Activated naive CD4-positive, alpha-beta T cell treated with anti-CD3 and anti-CD28 coated beads, Interleukin-2, amount 10 ng/mL, durations not matched to agents 7 days and 5 days (primary cell): ENCODE measurements at regions of chr6 and their contacts with region 1.

Region 1: DNA sequence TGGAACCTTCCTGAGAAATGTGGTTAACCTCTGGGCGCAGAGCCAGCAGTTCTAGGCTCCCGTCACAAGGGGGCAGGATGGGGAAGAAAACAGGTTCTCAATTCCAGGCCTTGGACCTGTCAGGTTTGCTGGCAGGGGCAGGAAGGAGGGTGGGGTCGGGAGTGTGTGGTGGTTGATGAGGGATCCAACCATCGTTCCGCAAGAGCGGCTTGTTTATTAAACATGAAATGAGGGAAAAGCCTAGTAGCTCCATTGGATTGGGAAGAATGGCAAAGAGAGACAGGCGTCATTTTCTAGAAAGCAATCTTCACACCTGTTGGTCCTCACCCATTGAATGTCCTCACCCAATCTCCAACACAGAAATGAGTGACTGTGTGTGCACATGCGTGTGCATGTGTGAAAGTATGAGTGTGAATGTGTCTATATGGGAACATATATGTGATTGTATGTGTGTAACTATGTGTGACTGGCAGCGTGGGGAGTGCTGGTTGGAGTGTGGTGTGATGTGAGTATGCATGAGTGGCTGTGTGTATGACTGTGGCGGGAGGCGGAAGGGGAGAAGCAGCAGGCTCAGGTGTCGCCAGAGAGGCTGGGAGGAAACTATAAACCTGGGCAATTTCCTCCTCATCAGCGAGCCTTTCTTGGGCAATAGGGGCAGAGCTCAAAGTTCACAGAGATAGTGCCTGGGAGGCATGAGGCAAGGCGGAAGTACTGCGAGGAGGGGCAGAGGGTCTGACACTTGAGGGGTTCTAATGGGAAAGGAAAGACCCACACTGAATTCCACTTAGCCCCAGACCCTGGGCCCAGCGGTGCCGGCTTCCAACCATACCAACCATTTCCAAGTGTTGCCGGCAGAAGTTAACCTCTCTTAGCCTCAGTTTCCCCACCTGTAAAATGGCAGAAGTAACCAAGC is 29.6 kb downstream of the SRSF3 start:
- DNase-seq: peak; percentile 86
- H3K4me3 Mint-ChIP-seq: no peak overlapping the region
- H3K27ac Mint-ChIP-seq: peak overlapping the region; percentile 60
- H3K4me1 Mint-ChIP-seq: peaks cover 35% of the 10 kb centered on the region
- H3K27me3 Mint-ChIP-seq: peaks cover 3% of the 10 kb centered on the region

Region 2: DNA sequence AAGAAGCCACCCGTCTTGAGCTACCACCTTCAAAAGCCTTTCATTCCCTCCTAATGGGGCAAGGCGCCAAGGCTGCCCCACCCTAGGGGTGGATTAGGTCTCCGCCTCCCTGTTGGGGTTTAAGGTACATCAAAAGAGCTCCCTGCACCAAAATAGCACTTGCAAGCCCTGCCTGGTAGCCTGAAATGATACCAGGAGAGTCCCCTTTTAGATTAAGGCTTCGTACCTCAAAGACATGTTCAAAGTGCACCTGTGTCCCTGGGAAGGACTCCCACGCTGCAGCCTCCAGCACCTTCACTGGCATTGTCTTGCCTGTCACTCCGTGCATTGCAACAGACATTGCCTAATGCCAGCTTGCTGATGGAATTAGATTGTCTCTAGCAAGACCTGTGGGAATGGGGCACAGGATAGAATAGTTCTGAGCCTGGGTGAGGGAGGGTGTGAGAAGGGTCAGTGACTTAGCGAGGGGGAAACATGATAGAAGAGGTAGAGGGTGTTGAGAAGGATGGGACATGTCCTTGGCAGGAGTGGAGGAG is 39.1 kb after region 1 on chr6:
- CTCF ChIA-PET with region 1: interaction called, 10 read pairs
- DNase-seq: peak; percentile 30
- H3K4me3 Mint-ChIP-seq: no peak overlapping the region
- H3K27ac Mint-ChIP-seq: no peak overlapping the region
- H3K4me1 Mint-ChIP-seq: peaks cover 21% of the 10 kb centered on the region
- H3K27me3 Mint-ChIP-seq: peaks cover 10% of the 10 kb centered on the region

Region 3: GRCh38 chr6:36839749-36840431 is 216.1 kb after region 1 on chr6:
- CTCF ChIA-PET with region 1: no interaction called
- DNase-seq: peak; percentile 65
- H3K4me3 Mint-ChIP-seq: peak overlapping the region; percentile 72
- H3K27ac Mint-ChIP-seq: no peak overlapping the region
- H3K4me1 Mint-ChIP-seq: peaks cover 18% of the 10 kb centered on the region
- H3K27me3 Mint-ChIP-seq: peaks cover 79% of the 10 kb centered on the region